ENCODE measurements at regions of chr10 and their contacts with region 1.

Region 1: GRCh38 chr10:86399879-86400704 is 33.5 kb upstream of the GRID1 start:
- DNase-seq: peak; percentile 94 to 96 (median 96)
- H3K4me3 ChIP-seq: peak overlapping the region; percentile 46 to 79 (median 72)
- H3K27ac ChIP-seq: no peak overlapping the region
- H3K4me1 ChIP-seq: peaks cover 0 to 28% (median 24%) of the 10 kb centered on the region in 4 experiments
- H3K27me3 ChIP-seq: peaks cover 0 to 24% (median 5%) of the 10 kb centered on the region in 5 experiments

Region 2: GRCh38 chr10:86389441-86390193 is 10.5 kb before region 1 on chr10:
- CTCF ChIA-PET with region 1: interaction called, 25 read pairs
- POLR2A ChIA-PET with region 1: no interaction called
- DNase-seq: peak in 2 of 3 donors; percentile 37 to 55
- H3K4me3 ChIP-seq: peak overlapping the region; percentile 8 to 68 (median 52)
- H3K27ac ChIP-seq: no peak overlapping the region
- H3K4me1 ChIP-seq: peaks cover 0 to 8% (median 7%) of the 10 kb centered on the region in 4 experiments
- H3K27me3 ChIP-seq: peaks cover 0 to 49% (median 20%) of the 10 kb centered on the region in 5 experiments

Region 3: DNA sequence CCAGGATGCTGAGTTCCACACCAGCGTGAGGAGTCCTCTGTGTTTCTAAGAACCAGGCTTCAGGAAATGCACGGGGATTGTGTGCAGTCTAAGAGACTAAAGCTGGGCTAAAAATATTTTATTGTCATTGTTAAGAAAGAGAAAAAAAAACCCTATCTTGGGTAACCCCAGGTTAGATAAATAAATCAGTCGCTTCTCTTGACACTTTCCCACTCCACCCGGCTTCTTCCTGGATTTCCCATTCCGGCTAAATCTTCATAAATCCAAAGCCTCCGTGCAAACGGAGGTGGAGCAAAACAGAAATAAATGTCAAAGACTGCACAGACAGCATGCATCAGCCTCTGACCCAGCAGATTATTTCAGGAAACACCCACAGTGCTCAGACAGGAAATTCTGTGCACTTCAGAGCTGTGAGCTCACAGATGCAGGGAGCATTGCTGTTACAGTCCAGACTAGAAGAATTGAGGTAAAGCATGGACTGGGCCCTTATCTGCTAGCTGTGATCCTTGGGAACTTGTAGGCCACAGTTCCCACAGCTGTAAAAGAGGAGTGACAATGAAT is 11.3 kb after region 1 on chr10:
- CTCF ChIA-PET with region 1: interaction called, 21 read pairs
- POLR2A ChIA-PET with region 1: interaction called, 8 read pairs
- DNase-seq: peak in 2 of 3 donors; percentile 67 to 76
- H3K4me3 ChIP-seq: peak overlapping the region in 5 of 7 experiments; percentile 13 to 64 (median 41)
- H3K27ac ChIP-seq: peak overlapping the region in 1 of 2 experiments; percentile 50
- H3K4me1 ChIP-seq: peaks cover 17 to 46% (median 37%) of the 10 kb centered on the region in 4 experiments
- H3K27me3 ChIP-seq: no peaks in the 10 kb centered on the region

Region 4: GRCh38 chr10:86423739-86424138 is 23.6 kb after region 1 on chr10:
- CTCF ChIA-PET with region 1: no interaction called
- POLR2A ChIA-PET with region 1: no interaction called
- DNase-seq: no peak
- H3K4me3 ChIP-seq: no peak overlapping the region
- H3K27ac ChIP-seq: no peak overlapping the region
- H3K4me1 ChIP-seq: no peaks in the 10 kb centered on the region
- H3K27me3 ChIP-seq: no peaks in the 10 kb centered on the region

Region 5: DNA sequence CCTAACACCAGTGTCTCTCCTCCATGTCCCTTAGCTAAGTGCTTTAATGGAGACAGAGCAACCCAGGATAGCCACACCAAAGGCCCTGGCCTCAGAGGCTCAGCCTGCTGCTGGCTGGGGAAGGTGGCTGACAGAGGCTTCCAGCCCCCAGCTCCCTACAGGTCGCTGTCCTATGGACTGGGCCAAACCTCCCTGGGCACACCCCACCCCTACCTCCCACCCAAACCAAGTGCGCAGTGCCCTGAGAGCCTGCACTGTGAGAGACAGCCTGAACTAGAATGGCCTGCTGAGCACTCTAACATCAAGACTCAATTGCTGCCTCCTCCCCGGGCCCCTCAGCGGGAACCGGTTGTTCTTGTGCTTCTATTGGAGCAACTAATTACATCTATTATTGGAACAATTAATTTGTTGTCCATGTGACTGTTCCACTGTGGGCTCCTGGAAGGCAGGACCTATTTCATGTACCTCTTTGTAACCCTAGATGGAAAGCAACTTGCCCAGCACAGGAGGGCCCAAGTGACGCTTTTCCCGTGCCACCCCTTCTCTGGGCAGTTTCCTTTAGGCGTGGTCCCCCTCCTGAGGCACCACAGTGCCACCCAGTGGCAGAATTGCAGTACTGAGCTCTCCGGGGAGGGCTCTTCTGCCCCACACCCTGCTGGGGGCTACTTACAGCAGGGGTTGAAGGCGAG is 185.1 kb after region 1 on chr10:
- CTCF ChIA-PET with region 1: interaction called, 21 read pairs
- POLR2A ChIA-PET with region 1: no interaction called
- DNase-seq: peak; percentile 68 to 71 (median 69)
- H3K4me3 ChIP-seq: no peak overlapping the region
- H3K27ac ChIP-seq: no peak overlapping the region
- H3K4me1 ChIP-seq: peaks cover 0 to 16% (median 6%) of the 10 kb centered on the region in 4 experiments
- H3K27me3 ChIP-seq: no peaks in the 10 kb centered on the region